Motor neuron (in vitro differentiated cells): ENCODE measurements at regions of chr1 and their contacts with region 1.

Region 1: GRCh38 chr1:181504399-181504842 is 21.1 kb downstream of the CACNA1E start:
- ATAC-seq: peak in 6 of 8 experiments; percentile 27 to 44 (median 38)
- H3K4me3 ChIP-seq: no peak overlapping the region
- H3K27ac ChIP-seq: peak overlapping the region; percentile 82 to 87
- H3K4me1 ChIP-seq: peaks cover 39 to 45% of the 10 kb centered on the region in 2 donors

Region 2: GRCh38 chr1:180062452-180062975 is 1441.9 kb before region 1 on chr1:
- in situ Hi-C with region 1: no loop called
- ATAC-seq: no peak
- H3K4me3 ChIP-seq: no peak overlapping the region
- H3K27ac ChIP-seq: no peak overlapping the region
- H3K4me1 ChIP-seq: no peaks in the 10 kb centered on the region

Region 3: GRCh38 chr1:181335629-181336028 is 168.8 kb before region 1 on chr1:
- in situ Hi-C with region 1: no loop called
- ATAC-seq: no peak
- H3K4me3 ChIP-seq: no peak overlapping the region
- H3K27ac ChIP-seq: no peak overlapping the region
- H3K4me1 ChIP-seq: no peaks in the 10 kb centered on the region

Region 4: DNA sequence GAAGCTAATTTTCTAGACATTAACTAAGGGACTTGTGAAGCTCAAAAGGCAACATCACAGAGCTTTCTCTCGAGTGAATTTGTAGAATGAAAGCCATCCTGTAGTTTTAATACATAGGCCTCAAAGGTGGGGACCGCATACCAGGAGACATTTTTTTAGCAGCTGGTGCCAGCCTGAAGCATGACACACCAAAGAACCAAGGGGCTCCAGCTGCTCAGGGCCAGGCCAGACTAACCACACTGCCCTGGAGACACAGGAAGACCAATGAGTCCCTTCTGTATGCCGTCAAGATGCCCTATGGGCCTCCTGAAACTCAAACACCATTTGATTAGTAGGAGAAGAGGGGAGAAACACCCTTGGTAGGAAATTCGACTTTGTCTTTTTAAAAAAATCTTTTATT is 135.0 kb before region 1 on chr1:
- in situ Hi-C with region 1: no loop called
- ATAC-seq: no peak
- H3K4me3 ChIP-seq: no peak overlapping the region
- H3K27ac ChIP-seq: no peak overlapping the region
- H3K4me1 ChIP-seq: no peaks in the 10 kb centered on the region

Region 5: GRCh38 chr1:182069028-182069466 is 564.6 kb after region 1 on chr1:
- in situ Hi-C with region 1: loop called in 2 of 9 experiments (anchors 25 kb)
- ATAC-seq: peak; percentile 70 to 100 (median 98)
- H3K4me3 ChIP-seq: no peak overlapping the region
- H3K27ac ChIP-seq: no peak overlapping the region
- H3K4me1 ChIP-seq: peaks cover 0 to 2% of the 10 kb centered on the region in 2 donors